Left cardiac atrium (tissue), 4 donors: ENCODE measurements at regions of chr7 and their contacts with region 1.

Region 1: DNA sequence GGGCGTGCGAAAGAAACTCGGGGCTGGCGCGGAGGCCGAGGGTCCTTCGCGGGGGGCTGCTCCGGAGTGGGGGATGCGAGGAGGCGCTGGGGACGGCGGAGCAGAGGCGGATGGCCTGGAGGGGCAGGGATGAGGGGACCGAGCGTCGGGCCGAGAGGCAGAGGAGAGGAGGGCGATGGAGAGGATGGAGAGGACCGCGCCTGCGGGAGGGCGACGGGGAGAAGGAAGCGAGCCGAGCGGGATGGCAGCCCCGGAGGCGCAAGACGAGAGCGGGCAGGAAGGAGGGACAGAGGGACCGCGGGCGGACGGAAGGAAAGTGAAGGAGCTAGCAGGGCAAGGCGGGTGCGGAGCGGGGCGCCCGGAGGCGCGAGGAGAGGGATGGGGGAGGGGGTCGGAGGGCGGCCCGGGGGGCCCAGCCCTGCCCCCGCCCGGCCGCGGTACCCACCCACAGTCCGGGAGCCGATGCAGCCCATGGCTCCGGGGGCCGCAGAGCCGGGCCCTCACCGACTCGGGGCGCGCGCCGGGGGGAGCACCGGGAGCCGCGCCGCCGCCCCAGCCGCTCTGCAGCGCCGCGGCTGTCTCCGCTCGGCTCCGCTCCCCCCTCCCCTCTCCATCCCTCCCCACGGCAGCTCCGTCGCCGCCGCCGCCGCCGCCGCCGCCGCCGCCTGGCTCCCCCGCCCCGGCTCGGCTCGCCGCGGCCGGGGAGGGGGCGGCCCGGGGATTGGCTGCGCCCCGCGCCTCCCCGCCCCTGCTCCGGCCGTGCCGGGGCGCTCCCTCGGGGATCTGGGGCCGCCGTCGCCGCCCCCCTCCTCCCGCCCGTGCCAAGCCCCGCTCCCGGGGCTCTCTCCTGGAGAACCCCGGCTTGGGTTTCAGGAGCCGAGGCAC is at the start of gene FAM131B:
- DNase-seq: no peak
- ATAC-seq: peak; percentile 52 to 63
- total RNA-seq, gene FAM131B: 0.29 to 0.97 TPM

Region 2: GRCh38 chr7:142689439-142690120 is 672.8 kb before region 1 on chr7:
- intact Hi-C with region 1: no loop called
- DNase-seq: no peak
- ATAC-seq: no peak

Region 3: GRCh38 chr7:143314127-143314526 is 48.2 kb before region 1 on chr7:
- intact Hi-C with region 1: loop called in 1 of 2 experiments (anchors 5 kb)
- DNase-seq: no peak
- ATAC-seq: no peak